ENCODE measurements at regions of chr3 and their contacts with region 1.

Region 1: DNA sequence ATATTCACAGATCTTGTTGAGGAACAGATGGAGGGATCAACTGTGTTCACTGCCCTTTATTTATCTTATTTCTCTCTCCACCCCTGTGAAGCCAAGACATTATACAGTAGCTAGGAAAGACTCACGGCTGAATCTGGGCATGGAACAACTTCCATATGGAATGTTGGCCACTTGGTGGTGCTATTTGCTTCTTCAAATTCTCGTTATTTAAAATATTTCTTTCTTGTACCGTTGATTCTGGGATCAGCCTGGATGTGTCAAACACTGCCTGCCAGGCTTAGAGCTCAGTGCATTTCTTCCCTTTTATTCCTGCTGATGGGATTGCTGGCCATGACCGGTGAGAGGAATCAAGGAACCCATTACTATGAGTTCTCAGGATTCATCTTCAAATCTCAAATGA is 17.5 kb upstream of the GASK1A start:
- DNase-seq: peak; percentile 65
- H3K4me3 ChIP-seq: no peak overlapping the region
- H3K27ac ChIP-seq: no peak overlapping the region
- H3K4me1 ChIP-seq: no peaks in the 10 kb centered on the region
- H3K27me3 ChIP-seq: no peaks in the 10 kb centered on the region
- CTCF ChIP-seq: peak; percentile 69
- EP300 ChIP-seq: no peak
- RAD21 ChIP-seq: peak; percentile 88

Region 2: GRCh38 chr3:42946050-42946449 is 15.6 kb before region 1 on chr3:
- CTCF ChIA-PET with region 1: interaction called, 16 read pairs
- POLR2A ChIA-PET with region 1: no interaction called
- DNase-seq: no peak
- H3K4me3 ChIP-seq: no peak overlapping the region
- H3K27ac ChIP-seq: no peak overlapping the region
- H3K4me1 ChIP-seq: no peaks in the 10 kb centered on the region
- H3K27me3 ChIP-seq: no peaks in the 10 kb centered on the region
- CTCF ChIP-seq: no peak
- EP300 ChIP-seq: no peak
- RAD21 ChIP-seq: no peak

Region 3: GRCh38 chr3:43087249-43087776 is 125.7 kb after region 1 on chr3:
- CTCF ChIA-PET with region 1: interaction called, 31 read pairs
- POLR2A ChIA-PET with region 1: no interaction called
- DNase-seq: no peak
- H3K4me3 ChIP-seq: no peak overlapping the region
- H3K27ac ChIP-seq: 0 out of 4 replicates have a peak overlapping the region, but pooled peaks of 1 of the 2 experiments have one; percentile 22
- H3K4me1 ChIP-seq: peaks cover 0 to 6% of the 10 kb centered on the region in 2 experiments; a peak in 1 of 4 replicates
- H3K27me3 ChIP-seq: no peaks in the 10 kb centered on the region
- CTCF ChIP-seq: no peak
- EP300 ChIP-seq: no peak
- RAD21 ChIP-seq: peak; percentile 21; the same call in 1 of the 2 replicates

Region 4: DNA sequence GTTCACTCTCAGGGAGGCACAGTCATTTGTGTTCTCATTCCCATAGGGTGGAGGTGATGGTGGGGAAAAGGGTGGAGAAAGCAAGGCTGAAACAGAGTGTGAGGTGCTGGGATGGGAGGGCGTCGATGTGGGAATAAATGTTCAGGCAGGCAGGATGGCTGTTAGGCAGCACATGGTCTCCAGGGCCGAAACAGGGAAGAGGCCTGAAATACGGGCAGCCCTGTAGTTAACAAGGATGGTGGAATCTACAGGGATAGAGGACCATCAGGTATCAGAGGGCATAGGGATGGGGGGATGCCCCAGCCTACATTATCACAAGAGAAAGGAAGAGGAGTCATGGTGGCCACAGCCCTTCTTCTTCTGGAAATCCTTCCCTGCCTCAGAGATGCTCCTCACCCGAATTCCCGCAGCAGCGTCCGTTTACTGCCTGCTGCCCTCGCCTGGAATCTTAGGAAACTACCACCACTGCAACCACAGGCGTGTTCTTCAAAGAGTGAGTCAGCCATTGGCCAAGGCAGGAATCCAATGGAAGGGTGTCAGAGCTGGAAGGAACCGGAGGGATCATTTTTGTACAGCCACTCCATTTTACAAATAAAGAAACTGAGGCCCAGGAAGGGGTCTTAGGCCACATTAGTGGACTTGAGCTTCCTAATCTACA is 194.0 kb after region 1 on chr3:
- CTCF ChIA-PET with region 1: interaction called, 48 read pairs
- POLR2A ChIA-PET with region 1: no interaction called
- DNase-seq: no peak
- H3K4me3 ChIP-seq: no peak overlapping the region
- H3K27ac ChIP-seq: no peak overlapping the region
- H3K4me1 ChIP-seq: peaks cover 0 to 10% of the 10 kb centered on the region in 2 experiments; a peak in 2 of 4 replicates
- H3K27me3 ChIP-seq: peaks cover 6% of the 10 kb centered on the region; the same call in 1 of the 2 replicates
- CTCF ChIP-seq: peak; percentile 52
- EP300 ChIP-seq: no peak
- RAD21 ChIP-seq: peak; percentile 49

Region 5: DNA sequence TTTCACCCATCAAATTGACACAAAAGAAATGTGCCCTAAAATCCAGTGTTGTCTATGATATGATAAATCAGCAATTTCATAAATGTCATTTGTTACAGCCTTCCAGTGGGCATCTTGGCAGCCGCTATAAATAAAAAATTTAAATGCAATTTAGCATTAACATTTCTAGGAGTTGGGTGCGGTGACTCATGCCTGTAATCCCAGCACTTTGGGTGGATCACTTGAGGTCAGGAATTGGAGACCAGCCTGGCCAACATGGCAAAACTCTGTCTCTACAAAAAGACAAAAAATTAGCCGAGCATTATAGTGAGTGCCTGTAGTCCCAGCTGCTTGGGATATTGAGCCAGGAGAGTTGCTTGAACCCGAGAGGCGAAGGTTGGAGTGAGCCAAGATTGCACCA is 210.1 kb after region 1 on chr3:
- CTCF ChIA-PET with region 1: interaction called, 10 read pairs
- POLR2A ChIA-PET with region 1: no interaction called
- DNase-seq: no peak
- H3K4me3 ChIP-seq: no peak overlapping the region
- H3K27ac ChIP-seq: no peak overlapping the region
- H3K4me1 ChIP-seq: peaks cover 0 to 3% of the 10 kb centered on the region in 2 experiments; a peak in 1 of 4 replicates
- H3K27me3 ChIP-seq: no peaks in the 10 kb centered on the region
- CTCF ChIP-seq: no peak
- EP300 ChIP-seq: no peak
- RAD21 ChIP-seq: no peak

Region 6: DNA sequence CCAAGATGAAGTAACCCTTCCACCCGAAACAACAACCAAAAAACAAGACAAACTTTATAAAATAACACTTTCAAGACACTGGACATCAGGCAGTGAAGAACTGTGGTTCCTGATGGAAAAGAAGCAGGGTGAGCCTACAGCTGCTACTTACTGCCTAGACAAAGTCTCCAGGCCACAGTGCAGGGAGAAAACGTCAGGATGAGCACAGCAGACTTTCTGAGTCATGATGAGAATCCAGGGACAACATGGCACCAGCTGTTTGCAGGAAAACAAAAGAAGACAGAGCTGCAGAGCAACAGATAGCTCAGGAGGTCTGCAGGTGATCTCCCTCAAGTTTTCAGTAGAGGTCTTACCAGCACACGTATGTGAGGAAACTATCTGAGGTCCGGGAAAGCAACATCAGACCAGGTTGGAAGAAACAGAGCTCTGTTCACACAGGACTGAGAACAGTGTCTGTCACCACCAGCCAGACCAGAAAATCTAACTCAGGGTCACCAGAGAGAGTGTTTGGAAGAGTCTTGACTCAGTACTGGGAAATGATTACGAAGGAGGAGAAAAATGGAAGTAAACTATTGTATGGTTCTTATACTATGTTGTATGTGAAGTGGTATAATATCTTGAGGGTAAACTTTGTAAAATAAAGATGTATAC is 551.2 kb after region 1 on chr3:
- CTCF ChIA-PET with region 1: interaction called, 18 read pairs
- POLR2A ChIA-PET with region 1: no interaction called
- DNase-seq: no peak
- H3K4me3 ChIP-seq: no peak overlapping the region
- H3K27ac ChIP-seq: peak overlapping the region in 1 of 2 experiments; percentile 25; a peak in 1 of 4 replicates
- H3K4me1 ChIP-seq: peaks cover 5 to 7% of the 10 kb centered on the region in 2 experiments; a peak in 3 of 4 replicates
- H3K27me3 ChIP-seq: no peaks in the 10 kb centered on the region
- CTCF ChIP-seq: no peak
- EP300 ChIP-seq: no peak
- RAD21 ChIP-seq: no peak

Measured in SK-N-SH (cell line).